Panc1 (cell line): ENCODE measurements at regions of chr16 and their contacts with region 1.

Region 1: DNA sequence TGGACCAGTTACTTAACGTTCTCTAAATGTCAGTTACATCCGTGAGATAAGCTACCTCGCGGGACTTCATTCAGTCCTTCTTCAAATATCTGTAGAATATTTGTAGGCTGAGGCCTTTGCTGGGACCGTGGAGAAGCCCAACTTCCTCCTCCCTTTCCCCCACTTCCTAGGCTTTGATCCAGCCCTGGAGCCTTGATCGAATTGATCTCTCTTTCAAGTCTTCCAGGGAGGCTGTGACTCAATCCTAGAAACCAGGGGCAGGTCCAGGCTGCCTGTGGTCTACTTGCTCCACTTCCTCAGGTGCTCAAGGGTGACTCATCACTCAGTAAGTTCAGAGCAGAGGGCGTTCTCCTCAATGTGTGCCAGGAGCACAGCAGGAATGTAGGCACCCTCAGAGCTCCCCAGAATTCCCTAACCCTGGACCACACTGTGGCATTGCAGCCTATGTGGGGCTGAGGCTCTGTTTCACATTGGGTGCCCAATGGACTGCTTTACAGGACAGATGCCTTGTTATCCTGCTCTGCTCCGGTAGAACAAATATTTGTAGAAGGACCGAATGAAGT is 11.2 kb upstream of the CEP20 start:
- DNase-seq: peak; percentile 92
- ATAC-seq: peak; percentile 98
- H3K4me3 ChIP-seq: peak overlapping the region in 1 of 2 experiments; percentile 40; a peak in 2 of 4 replicates
- H3K27ac ChIP-seq: peak overlapping the region; percentile 80
- H3K4me1 ChIP-seq: peaks cover 29% of the 10 kb centered on the region
- H3K27me3 ChIP-seq: no peaks in the 10 kb centered on the region
- CTCF ChIP-seq: no peak

Region 2: GRCh38 chr16:16183562-16183961 is 283.9 kb after region 1 on chr16:
- CTCF ChIA-PET with region 1: interaction called, 16 read pairs
- POLR2A ChIA-PET with region 1: no interaction called
- in situ Hi-C with region 1: no loop called
- intact Hi-C with region 1: no loop called
- DNase-seq: no peak
- ATAC-seq: no peak
- H3K4me3 ChIP-seq: no peak overlapping the region
- H3K27ac ChIP-seq: no peak overlapping the region
- H3K4me1 ChIP-seq: no peaks in the 10 kb centered on the region
- H3K27me3 ChIP-seq: no peaks in the 10 kb centered on the region
- CTCF ChIP-seq: peak; percentile 38